ENCODE measurements at regions of chr15 and their contacts with region 1.

Region 1: GRCh38 chr15:43285609-43286037 is 18.9 kb upstream of the TGM5 start:
- DNase-seq: peak; percentile 47 to 70
- H3K4me3 ChIP-seq: no peak overlapping the region
- H3K4me1 ChIP-seq: no peaks in the 10 kb centered on the region
- H3K27me3 ChIP-seq: no peaks in the 10 kb centered on the region

Region 2: DNA sequence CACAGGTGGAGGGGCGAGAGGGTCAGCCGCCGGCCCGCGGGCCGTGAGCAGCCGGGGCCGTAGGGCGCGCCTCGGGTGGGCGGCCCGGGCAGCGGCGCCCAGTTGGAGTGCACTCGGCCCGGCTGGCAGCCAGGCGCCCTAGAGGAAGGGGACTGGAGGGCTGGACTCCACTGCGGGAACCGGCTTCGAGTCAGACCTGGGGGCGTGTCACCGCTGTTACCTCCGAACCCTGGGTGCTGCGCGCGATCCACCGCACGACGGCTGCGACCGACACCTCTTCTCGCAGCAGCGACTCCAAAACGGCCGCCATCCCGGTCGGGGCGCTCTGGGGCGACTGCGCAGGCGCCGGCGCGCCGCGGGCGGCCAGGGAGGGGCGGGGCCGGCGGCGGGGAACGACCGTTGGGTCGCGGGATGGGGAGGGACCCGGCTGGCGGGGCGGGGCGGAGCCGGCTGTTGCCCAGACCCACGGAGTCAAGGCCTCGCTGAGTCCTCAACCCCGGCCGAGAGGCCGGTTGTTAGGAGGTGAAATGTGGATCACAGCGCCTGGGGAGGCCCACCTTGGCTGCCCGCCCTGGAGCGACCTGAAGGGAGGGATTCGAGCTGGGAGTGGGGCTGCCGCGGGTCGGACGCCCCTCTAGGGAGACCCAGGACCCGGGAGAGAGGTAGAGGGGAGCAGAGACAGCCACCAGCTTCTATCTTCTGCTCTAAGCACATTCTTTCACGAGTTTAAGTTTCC is 548.7 kb before region 1 on chr15 and contains the start of gene CDAN1:
- in situ Hi-C with region 1: loop called (anchors 25 kb)
- DNase-seq: peak; percentile 81 to 95
- H3K4me3 ChIP-seq: peak within 1 kb of the TSS; percentile 72
- H3K4me1 ChIP-seq: peaks cover 17% of the 10 kb centered on the region
- H3K27me3 ChIP-seq: no peaks in the 10 kb centered on the region

Region 3: DNA sequence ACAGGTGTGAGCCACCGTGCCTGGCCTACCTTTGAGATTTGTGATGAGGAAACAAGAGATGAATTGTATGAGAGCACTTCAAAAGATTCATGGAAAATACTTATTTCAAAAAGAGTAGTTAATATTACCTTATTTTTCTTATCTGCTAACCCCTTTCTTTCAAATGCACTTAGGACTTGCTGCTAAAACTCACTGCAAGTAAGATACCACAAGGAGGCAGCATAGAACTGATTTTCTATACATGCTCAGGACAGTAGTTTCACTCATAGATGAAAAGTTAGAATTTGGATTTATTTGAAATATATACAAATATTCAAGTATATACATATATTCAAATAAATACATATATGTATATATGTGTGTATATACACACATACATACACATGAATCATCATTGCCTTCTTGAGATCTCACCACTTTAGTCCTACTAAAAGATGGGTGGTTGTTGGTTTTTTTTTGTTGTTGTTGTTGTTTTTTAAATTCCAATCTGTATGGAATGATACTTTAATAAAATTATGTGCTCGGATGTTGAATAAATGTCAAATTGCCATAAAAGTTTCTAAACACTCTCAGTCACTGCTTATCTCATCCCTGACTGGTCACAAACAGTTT is 98.0 kb before region 1 on chr15:
- in situ Hi-C with region 1: no loop called
- DNase-seq: peak in 1 of 2 experiments; percentile 55
- H3K4me3 ChIP-seq: no peak overlapping the region
- H3K4me1 ChIP-seq: peaks cover 10% of the 10 kb centered on the region
- H3K27me3 ChIP-seq: no peaks in the 10 kb centered on the region

Region 4: GRCh38 chr15:43230640-43231115 is 54.9 kb before region 1 on chr15:
- in situ Hi-C with region 1: no loop called
- DNase-seq: no peak
- H3K4me3 ChIP-seq: no peak overlapping the region
- H3K4me1 ChIP-seq: no peaks in the 10 kb centered on the region
- H3K27me3 ChIP-seq: no peaks in the 10 kb centered on the region

Region 5: DNA sequence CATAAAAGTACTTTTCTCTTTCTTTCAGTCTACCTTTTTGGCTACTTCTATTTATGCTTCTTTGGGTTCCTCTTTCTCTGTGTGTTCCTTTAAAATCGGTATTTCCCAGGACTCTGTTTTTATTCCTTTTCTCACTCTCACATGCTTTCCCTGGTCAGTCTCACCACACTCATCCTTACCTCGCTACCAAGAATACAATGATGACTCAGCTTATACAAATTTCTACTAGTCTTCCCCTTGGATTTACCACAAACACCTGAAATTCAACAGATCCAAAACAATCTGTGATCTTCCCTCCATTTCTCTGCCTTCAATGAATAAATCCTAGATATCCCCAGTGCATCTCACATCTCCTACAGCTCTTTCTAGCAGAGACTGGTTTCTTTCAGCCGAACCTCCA is 138.2 kb after region 1 on chr15:
- in situ Hi-C with region 1: no loop called
- DNase-seq: no peak
- H3K4me3 ChIP-seq: no peak overlapping the region
- H3K4me1 ChIP-seq: no peaks in the 10 kb centered on the region
- H3K27me3 ChIP-seq: no peaks in the 10 kb centered on the region